ENCODE measurements at regions of chr3 and their contacts with region 1.

Region 1: GRCh38 chr3:80227216-80227615 is 459.4 kb upstream of the ROBO1 start:
- DNase-seq: no peak
- H3K4me3 ChIP-seq: no peak overlapping the region
- H3K27ac ChIP-seq: no peak overlapping the region
- H3K4me1 ChIP-seq: no peaks in the 10 kb centered on the region
- H3K27me3 ChIP-seq: no peaks in the 10 kb centered on the region
- CTCF ChIP-seq: no peak
- POLR2A ChIP-seq: no peak

Region 2: DNA sequence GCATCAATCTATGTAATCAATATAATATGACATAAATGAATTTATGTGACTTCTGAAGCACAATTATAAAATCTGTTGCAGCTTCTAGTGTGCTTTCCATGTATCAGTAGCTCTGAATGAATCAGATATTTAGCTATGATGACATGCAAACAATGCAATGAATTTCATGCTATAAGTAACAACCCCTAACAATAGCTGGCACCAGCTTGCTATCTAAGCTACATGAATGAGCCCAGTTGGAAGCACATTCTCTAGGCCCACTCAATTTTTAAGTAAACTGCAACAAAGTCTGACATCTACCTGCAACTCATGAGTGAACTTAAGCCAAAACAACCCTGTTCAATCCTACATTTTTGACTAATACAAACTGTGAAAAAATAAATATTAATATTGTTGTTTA is 47.9 kb after region 1 on chr3:
- intact Hi-C with region 1: loop called (anchors 2 kb)
- DNase-seq: no peak
- H3K4me3 ChIP-seq: no peak overlapping the region
- H3K27ac ChIP-seq: no peak overlapping the region
- H3K4me1 ChIP-seq: no peaks in the 10 kb centered on the region
- H3K27me3 ChIP-seq: no peaks in the 10 kb centered on the region
- CTCF ChIP-seq: no peak
- POLR2A ChIP-seq: no peak

Region 3: DNA sequence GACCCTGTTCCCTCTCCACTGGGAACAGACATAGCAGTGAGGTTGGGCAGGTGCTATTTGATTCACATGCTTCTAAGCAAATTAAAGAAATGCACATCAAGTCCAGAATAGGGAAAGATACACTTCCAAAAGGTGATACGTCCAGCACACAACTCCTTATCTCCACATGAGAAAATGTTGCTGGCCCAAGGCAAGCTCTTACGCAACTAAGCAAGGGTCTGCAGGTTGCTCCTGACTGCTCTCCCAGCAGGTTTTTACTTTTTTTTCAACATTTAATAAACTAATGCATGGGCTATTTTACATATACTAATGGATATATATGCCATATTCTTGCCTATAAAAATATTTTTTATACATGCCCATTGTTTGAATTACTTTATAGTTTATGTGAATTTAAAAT is 359.1 kb after region 1 on chr3:
- intact Hi-C with region 1: no loop called
- DNase-seq: no peak
- H3K4me3 ChIP-seq: no peak overlapping the region
- H3K27ac ChIP-seq: no peak overlapping the region
- H3K4me1 ChIP-seq: no peaks in the 10 kb centered on the region
- H3K27me3 ChIP-seq: no peaks in the 10 kb centered on the region
- CTCF ChIP-seq: no peak
- POLR2A ChIP-seq: no peak

Measured in breast epithelium (tissue), 4 donors.